AG04449 (cell line): ENCODE measurements at regions of chr11 and their contacts with region 1.

Region 1: GRCh38 chr11:86360775-86361395 is 13.8 kb upstream of the CCDC81 start:
- DNase-seq: peak; percentile 29
- H3K4me3 ChIP-seq: no peak overlapping the region
- CTCF ChIP-seq: peak; percentile 52

Region 2: GRCh38 chr11:85955531-85955930 is 405.4 kb before region 1 on chr11:
- CTCF ChIA-PET with region 1: no interaction called
- POLR2A ChIA-PET with region 1: no interaction called
- DNase-seq: peak; percentile 61
- H3K4me3 ChIP-seq: no peak overlapping the region
- CTCF ChIP-seq: no peak

Region 3: GRCh38 chr11:86370922-86371594 is 10.2 kb after region 1 on chr11:
- CTCF ChIA-PET with region 1: interaction called, 48 read pairs
- POLR2A ChIA-PET with region 1: no interaction called
- DNase-seq: peak; percentile 7
- H3K4me3 ChIP-seq: no peak overlapping the region
- CTCF ChIP-seq: no peak

Region 4: GRCh38 chr11:86396396-86396795 is 35.5 kb after region 1 on chr11:
- CTCF ChIA-PET with region 1: interaction called, 22 read pairs
- POLR2A ChIA-PET with region 1: no interaction called
- DNase-seq: peak; percentile 64
- H3K4me3 ChIP-seq: no peak overlapping the region
- CTCF ChIP-seq: no peak

Region 5: DNA sequence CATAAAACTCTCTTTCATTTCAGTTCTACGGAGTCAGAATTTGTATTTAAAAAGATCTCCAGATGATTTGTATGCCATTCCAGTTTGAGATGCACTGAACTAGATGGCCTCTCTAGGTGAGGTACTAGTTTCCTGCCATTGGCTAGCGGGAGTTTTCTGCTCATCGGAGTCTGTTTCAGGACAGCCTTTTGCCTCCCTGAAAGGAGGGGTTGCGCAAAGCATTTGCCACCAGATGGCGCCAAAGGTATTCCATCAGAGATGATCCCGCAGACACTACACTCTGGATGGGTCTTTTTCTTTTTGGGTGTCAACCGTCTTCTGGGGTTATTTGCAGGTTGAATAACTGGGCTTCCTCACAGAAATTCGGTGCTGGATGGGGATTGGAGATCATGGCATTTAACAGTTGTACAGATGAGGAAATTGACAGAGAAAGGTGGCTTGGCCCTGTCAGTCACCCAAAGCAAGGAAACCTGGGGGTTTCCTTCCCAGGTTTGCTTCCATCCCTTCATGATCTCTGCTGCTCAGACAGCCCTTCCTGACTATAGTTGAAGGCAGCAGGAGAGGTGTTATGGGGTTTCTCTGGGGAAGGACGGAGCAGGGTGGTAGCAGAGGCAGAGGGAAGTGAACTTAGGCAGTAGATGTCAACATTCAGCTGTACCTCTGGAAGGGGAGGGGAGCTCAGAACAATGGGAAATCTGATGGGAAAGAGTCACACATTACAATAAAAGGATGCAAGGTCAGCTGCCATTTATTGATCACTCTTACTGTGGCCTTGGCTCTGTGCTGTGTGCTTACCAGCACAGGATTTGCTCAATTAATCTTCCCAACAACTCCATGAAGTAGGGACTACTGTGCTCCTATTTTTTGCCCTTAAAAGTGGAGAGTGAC is 95.4 kb after region 1 on chr11:
- CTCF ChIA-PET with region 1: interaction called, 29 read pairs
- POLR2A ChIA-PET with region 1: no interaction called
- DNase-seq: no peak
- H3K4me3 ChIP-seq: no peak overlapping the region
- CTCF ChIP-seq: peak; percentile 83